ENCODE measurements at regions of chr1 and their contacts with region 1.

Region 1: DNA sequence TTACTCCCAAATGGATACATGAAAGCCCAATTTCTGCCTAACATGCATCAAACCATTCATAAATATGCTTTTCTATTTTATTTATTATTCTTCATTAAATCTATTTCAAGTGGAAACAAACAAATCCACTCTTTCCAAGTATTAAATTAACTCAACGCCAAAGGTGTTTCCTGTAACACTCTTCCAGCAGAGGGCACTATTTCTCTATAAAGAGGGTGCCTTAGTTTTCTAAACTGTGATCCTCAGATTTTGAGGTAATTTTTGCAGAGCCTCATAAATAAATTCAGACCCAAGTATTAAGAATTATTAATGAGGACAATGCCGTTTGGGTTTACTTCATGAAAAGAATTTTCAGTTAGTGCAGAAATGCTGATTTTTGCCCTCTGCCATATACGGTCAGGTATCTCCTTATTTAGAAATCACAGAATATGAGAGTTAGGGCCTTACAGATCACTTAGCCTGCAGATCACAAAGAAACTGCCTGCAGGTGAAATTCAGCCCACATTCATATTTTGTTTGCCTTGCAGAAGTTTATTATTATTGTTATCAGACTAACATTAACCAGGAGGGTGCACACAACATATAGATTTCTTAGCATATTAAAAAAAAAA is 40.1 kb upstream of the MYSM1 start:
- DNase-seq: peak in 7 of 9 donors; percentile 36 to 68 (median 62)
- ATAC-seq: peak; percentile 70
- H3K4me3 ChIP-seq: no peak overlapping the region
- H3K4me3 Mint-ChIP-seq: no peak overlapping the region
- H3K27ac ChIP-seq: no peak overlapping the region
- H3K27ac Mint-ChIP-seq: no peak overlapping the region
- H3K4me1 ChIP-seq: no peaks in the 10 kb centered on the region
- H3K4me1 Mint-ChIP-seq: peaks cover 0 to 14% (median 0%) of the 10 kb centered on the region in 7 donors
- H3K27me3 ChIP-seq: no peaks in the 10 kb centered on the region
- H3K27me3 Mint-ChIP-seq: peaks cover 0 to 5% (median 3%) of the 10 kb centered on the region in 5 donors

Region 2: GRCh38 chr1:56831871-56832693 is 1907.9 kb before region 1 on chr1:
- CTCF ChIA-PET with region 1: no interaction called
- POLR2A ChIA-PET with region 1: no interaction called
- intact Hi-C with region 1: loop called in 1 of 2 experiments (anchors 5 kb)
- DNase-seq: peak; percentile 39 to 76 (median 56)
- ATAC-seq: peak; percentile 83
- H3K4me3 ChIP-seq: no peak overlapping the region
- H3K4me3 Mint-ChIP-seq: peak overlapping the region in 3 of 10 donors; percentile 20 to 51 (median 22)
- H3K27ac ChIP-seq: no peak overlapping the region
- H3K27ac Mint-ChIP-seq: no peak overlapping the region
- H3K4me1 ChIP-seq: no peaks in the 10 kb centered on the region
- H3K4me1 Mint-ChIP-seq: peaks cover 0 to 8% (median 3%) of the 10 kb centered on the region in 7 donors
- H3K27me3 ChIP-seq: peaks cover 0 to 4% of the 10 kb centered on the region in 2 donors
- H3K27me3 Mint-ChIP-seq: peaks cover 0 to 31% (median 23%) of the 10 kb centered on the region in 5 donors

Region 3: DNA sequence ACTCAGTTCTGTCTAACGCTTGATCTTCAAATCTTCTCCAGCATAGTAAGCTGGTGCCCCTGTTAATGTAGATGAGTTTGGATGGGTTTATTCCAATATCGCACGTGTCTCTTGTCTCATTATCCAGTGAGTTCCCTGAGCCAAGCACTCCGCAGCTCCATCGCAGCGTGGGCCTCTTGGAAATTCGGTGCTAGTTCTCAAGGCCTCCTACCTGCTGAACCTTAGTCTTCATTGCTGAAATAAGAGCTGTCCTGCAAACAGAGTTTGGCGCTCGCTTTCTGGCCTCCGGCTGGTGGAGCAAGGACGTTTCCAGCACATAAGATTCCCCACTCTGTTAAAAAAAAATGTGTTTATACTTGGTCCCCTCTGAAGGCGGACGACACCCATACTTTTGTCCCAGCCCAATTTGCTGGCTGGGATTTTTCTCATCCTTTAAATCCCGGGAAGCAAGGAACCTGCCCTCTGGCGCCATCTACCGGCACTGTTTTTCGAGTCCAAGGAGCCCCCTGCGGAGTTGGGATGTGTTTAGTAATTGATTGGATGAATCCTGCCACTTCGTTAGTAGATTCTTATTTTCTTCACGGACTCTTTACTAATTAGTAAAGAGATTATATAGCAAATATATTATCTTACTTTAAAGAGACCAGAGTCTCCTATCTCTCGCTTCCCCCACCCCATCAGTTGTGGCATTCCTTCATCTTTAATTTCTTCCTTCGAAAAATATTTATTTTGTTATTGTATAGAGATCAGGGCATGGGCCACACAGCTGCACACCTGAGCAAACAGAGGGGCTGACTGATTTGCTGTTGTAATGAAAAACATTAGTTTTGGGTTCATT is 29.2 kb after region 1 on chr1:
- CTCF ChIA-PET with region 1: interaction called, 3 read pairs
- POLR2A ChIA-PET with region 1: no interaction called
- intact Hi-C with region 1: loop called (anchors 1 kb)
- DNase-seq: peak in 3 of 9 donors; percentile 10 to 44 (median 10)
- ATAC-seq: no peak
- H3K4me3 ChIP-seq: no peak overlapping the region
- H3K4me3 Mint-ChIP-seq: no peak overlapping the region
- H3K27ac ChIP-seq: no peak overlapping the region
- H3K27ac Mint-ChIP-seq: peak overlapping the region in 1 of 9 donors; percentile 23
- H3K4me1 ChIP-seq: peaks cover 0 to 13% of the 10 kb centered on the region in 2 donors
- H3K4me1 Mint-ChIP-seq: peaks cover 10 to 15% (median 13%) of the 10 kb centered on the region in 7 donors
- H3K27me3 ChIP-seq: no peaks in the 10 kb centered on the region
- H3K27me3 Mint-ChIP-seq: peaks cover 0 to 11% (median 0%) of the 10 kb centered on the region in 5 donors

Region 4: DNA sequence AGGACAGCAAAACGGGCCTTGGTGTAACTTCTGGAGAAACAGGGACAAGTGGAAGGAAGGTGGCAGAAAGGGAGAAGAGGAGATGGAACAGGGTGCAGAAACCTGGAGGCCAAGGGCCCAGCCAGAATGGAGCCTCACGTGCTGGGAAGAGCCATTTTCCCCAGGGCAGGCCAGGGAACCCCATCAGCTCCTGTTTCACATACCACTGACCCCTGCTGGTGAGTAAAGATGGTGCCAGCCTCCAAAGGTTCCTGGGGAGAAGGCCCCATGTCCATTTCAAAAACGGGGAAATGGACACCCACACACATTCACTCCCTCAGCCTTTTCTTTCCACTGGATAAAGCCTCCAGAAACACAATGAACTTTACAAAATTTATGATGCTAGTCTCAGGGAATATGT is 101.5 kb after region 1 on chr1:
- CTCF ChIA-PET with region 1: no interaction called
- POLR2A ChIA-PET with region 1: no interaction called
- intact Hi-C with region 1: loop called in 1 of 2 experiments (anchors 1 kb)
- DNase-seq: peak in 1 of 9 donors; percentile 5
- ATAC-seq: peak; percentile 44
- H3K4me3 ChIP-seq: no peak overlapping the region
- H3K4me3 Mint-ChIP-seq: no peak overlapping the region
- H3K27ac ChIP-seq: no peak overlapping the region
- H3K27ac Mint-ChIP-seq: no peak overlapping the region
- H3K4me1 ChIP-seq: no peaks in the 10 kb centered on the region
- H3K4me1 Mint-ChIP-seq: peaks cover 0 to 11% (median 1%) of the 10 kb centered on the region in 7 donors
- H3K27me3 ChIP-seq: no peaks in the 10 kb centered on the region
- H3K27me3 Mint-ChIP-seq: no peaks in the 10 kb centered on the region

Region 5: GRCh38 chr1:59076612-59077011 is 336.7 kb after region 1 on chr1:
- CTCF ChIA-PET with region 1: no interaction called
- POLR2A ChIA-PET with region 1: no interaction called
- intact Hi-C with region 1: loop called in 1 of 2 experiments (anchors 1 kb)
- DNase-seq: peak in 4 of 9 donors; percentile 1 to 12 (median 9)
- ATAC-seq: no peak
- H3K4me3 ChIP-seq: no peak overlapping the region
- H3K4me3 Mint-ChIP-seq: no peak overlapping the region
- H3K27ac ChIP-seq: no peak overlapping the region
- H3K27ac Mint-ChIP-seq: peak overlapping the region in 2 of 9 donors; percentile 8 to 34
- H3K4me1 ChIP-seq: peaks cover 12 to 13% of the 10 kb centered on the region in 2 donors
- H3K4me1 Mint-ChIP-seq: peaks cover 11 to 31% (median 12%) of the 10 kb centered on the region in 7 donors
- H3K27me3 ChIP-seq: no peaks in the 10 kb centered on the region
- H3K27me3 Mint-ChIP-seq: peaks cover 0 to 5% (median 3%) of the 10 kb centered on the region in 5 donors

Region 6: DNA sequence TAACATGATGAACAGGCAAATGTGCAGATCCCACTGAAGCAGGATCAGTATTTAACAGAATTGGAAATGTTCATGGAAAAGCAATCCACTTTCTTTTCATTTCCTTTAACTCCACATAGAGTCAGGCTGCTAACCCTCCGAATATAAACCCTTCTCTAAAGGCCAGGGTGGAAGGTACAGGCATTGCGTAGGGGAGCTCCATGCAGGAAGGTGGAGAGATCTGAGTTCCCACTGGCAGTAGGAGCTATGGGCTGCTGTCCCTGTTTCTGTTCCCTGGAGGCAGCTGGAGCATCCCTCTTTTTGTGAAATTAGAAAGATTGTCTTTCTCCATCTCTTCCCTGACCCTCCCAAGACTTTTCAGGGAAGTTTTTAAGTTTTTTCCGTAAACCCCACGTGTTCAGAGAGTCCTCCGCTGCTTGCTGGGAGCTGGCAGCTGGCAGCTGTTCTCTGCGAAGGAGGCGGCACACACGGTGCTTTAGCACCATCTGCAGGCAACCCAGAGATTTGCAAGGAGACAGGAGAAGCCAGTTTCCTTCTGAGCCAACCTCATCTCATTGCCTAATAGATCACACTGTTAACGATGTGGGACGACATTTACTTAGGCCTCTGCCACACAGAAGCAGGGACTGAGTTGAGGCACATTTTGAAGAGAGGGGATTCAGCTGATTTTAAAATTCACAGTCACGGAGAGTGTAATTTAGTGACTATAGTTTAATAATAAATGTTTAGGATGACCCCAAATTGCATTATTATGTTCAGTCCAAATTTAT is 1019.4 kb after region 1 on chr1:
- CTCF ChIA-PET with region 1: interaction called, 12 read pairs
- POLR2A ChIA-PET with region 1: no interaction called
- intact Hi-C with region 1: loop called (anchors 1 kb)
- DNase-seq: peak; percentile 46 to 76 (median 64)
- ATAC-seq: peak; percentile 95
- H3K4me3 ChIP-seq: no peak overlapping the region
- H3K4me3 Mint-ChIP-seq: peak overlapping the region in 7 of 10 donors; percentile 9 to 64 (median 37)
- H3K27ac ChIP-seq: no peak overlapping the region
- H3K27ac Mint-ChIP-seq: peak overlapping the region in 2 of 9 donors; percentile 24 to 32
- H3K4me1 ChIP-seq: no peaks in the 10 kb centered on the region
- H3K4me1 Mint-ChIP-seq: peaks cover 0 to 8% (median 4%) of the 10 kb centered on the region in 7 donors
- H3K27me3 ChIP-seq: no peaks in the 10 kb centered on the region
- H3K27me3 Mint-ChIP-seq: no peaks in the 10 kb centered on the region

Region 7: DNA sequence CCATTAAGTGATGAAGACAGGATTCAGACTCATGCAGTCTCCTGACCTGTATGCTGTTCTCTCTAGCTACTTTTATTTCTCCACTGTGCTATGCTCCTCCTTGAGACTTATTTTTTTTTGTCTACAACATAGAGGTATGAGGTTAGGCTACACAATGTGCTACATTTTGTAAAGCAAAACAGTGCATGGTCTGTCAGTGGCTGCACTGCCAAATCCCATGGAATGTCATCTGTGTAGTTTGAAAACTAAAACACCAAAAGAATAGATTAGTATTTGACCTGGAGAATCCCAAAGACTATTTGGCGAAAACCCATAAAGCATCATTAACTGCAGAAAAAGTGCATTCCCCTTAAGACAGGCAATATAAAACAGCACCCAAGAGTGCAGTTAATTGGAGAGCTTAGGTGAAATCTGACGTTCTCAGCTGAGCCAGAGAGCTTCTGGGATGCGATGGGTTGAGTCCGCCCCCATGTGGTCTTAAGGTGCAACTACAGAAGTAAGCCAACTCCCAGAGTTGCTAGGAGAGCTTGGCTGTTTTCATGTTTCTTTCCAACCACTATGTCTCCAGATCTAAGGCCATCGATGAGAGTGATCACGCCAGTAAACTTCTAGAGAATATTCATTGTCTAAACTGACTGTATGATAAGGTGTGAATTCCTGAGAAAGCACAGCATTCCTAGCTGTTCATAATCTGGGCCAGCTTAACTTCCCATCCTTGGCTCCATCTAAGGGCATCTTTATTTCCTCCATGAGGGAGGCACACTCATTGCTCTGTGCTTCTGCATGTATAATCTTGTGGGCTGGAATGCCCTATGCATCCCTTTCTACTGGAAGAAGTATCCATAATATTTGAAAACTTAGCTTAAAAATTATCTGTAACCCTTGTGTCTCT is 1207.3 kb after region 1 on chr1:
- CTCF ChIA-PET with region 1: interaction called, 4 read pairs
- POLR2A ChIA-PET with region 1: no interaction called
- intact Hi-C with region 1: loop called in 1 of 2 experiments (anchors 10 kb)
- DNase-seq: peak in 8 of 9 donors; percentile 13 to 64 (median 52)
- ATAC-seq: peak; percentile 90
- H3K4me3 ChIP-seq: no peak overlapping the region
- H3K4me3 Mint-ChIP-seq: no peak overlapping the region
- H3K27ac ChIP-seq: no peak overlapping the region
- H3K27ac Mint-ChIP-seq: no peak overlapping the region
- H3K4me1 ChIP-seq: no peaks in the 10 kb centered on the region
- H3K4me1 Mint-ChIP-seq: no peaks in the 10 kb centered on the region
- H3K27me3 ChIP-seq: no peaks in the 10 kb centered on the region
- H3K27me3 Mint-ChIP-seq: peaks cover 2 to 11% (median 6%) of the 10 kb centered on the region in 5 donors